HCT116 (cell line): ENCODE measurements at regions of chr6 and their contacts with region 1.

Region 1: GRCh38 chr6:157323255-157323965 is at the start of gene TMEM242:
- DNase-seq: peak; percentile 92
- ATAC-seq: peak; percentile 92
- H3K4me3 ChIP-seq: peak within 1 kb of the TSS; percentile 72 to 94
- H3K27ac ChIP-seq: peak within 1 kb of the TSS; percentile 52
- H3K4me1 ChIP-seq: peaks cover 3 to 11% of the 10 kb centered on the region in 2 experiments; a peak in 3 of 4 replicates
- H3K27me3 ChIP-seq: peaks cover 10% of the 10 kb centered on the region; the same call in 1 of the 2 replicates
- CTCF ChIP-seq: no peak
- POLR2A ChIP-seq: peak; percentile 90
- RAD21 ChIP-seq: peak; percentile 28; the same call in 1 of the 2 replicates
- total RNA-seq, gene TMEM242: 11.6 TPM

Region 2: DNA sequence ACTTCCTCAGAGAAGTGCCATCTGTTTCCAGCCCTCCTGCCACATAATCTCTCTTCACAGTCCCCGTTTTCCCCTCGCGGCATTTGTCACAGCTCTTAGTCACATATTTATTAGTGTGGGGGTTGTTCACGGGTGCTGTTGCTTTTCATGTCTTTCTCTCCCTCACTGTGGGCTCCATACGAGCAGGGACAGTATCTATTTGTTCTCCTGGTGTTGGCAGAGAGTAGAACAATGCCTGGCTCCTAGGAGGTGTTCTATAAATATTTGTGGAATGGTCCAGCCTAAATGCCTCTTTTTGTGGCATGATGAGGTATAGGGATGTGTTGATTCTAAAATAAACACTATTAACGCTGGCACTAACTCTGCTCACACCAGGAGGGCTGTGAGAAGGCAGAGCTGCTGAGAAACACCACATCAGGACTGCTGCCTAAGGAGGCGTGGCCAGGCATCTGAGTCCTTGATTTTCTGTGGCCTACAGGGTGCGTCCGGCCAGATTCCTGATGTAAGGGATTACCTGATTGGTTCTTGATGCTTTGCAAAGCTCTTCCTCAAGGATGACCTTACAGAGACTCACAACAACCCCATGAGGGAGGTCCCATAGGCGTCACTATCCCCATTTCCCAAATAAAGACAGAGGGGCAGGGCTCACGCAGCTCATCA is 766.0 kb before region 1 on chr6:
- CTCF ChIA-PET with region 1: no interaction called
- POLR2A ChIA-PET with region 1: no interaction called
- RAD21 ChIA-PET with region 1: no interaction called
- intact Hi-C with region 1: no loop called
- DNase-seq: no peak
- ATAC-seq: peak; percentile 58
- H3K4me3 ChIP-seq: no peak overlapping the region
- H3K27ac ChIP-seq: no peak overlapping the region
- H3K4me1 ChIP-seq: no peaks in the 10 kb centered on the region
- H3K27me3 ChIP-seq: peaks cover 2% of the 10 kb centered on the region; the same call in 1 of the 2 replicates
- CTCF ChIP-seq: no peak
- POLR2A ChIP-seq: no peak
- RAD21 ChIP-seq: no peak

Region 3: GRCh38 chr6:156890627-156891314 is 432.6 kb before region 1 on chr6:
- CTCF ChIA-PET with region 1: no interaction called
- POLR2A ChIA-PET with region 1: no interaction called
- RAD21 ChIA-PET with region 1: no interaction called
- intact Hi-C with region 1: no loop called
- DNase-seq: no peak
- ATAC-seq: no peak
- H3K4me3 ChIP-seq: no peak overlapping the region
- H3K27ac ChIP-seq: no peak overlapping the region
- H3K4me1 ChIP-seq: no peaks in the 10 kb centered on the region
- H3K27me3 ChIP-seq: no peaks in the 10 kb centered on the region
- CTCF ChIP-seq: no peak
- POLR2A ChIP-seq: no peak
- RAD21 ChIP-seq: no peak

Region 4: GRCh38 chr6:157335829-157336228 is 12.4 kb after region 1 on chr6:
- CTCF ChIA-PET with region 1: interaction called, 11 read pairs
- POLR2A ChIA-PET with region 1: interaction called, 3 read pairs
- RAD21 ChIA-PET with region 1: no interaction called
- intact Hi-C with region 1: no loop called
- DNase-seq: no peak
- ATAC-seq: peak; percentile 32
- H3K4me3 ChIP-seq: no peak overlapping the region
- H3K27ac ChIP-seq: no peak overlapping the region
- H3K4me1 ChIP-seq: 0 out of 4 replicates have a peak, but pooled peaks cover 0 to 5% of the 10 kb centered on the region in 2 experiments
- H3K27me3 ChIP-seq: no peaks in the 10 kb centered on the region
- CTCF ChIP-seq: no peak
- POLR2A ChIP-seq: no peak
- RAD21 ChIP-seq: no peak

Region 5: GRCh38 chr6:157514659-157515496 is 191.5 kb after region 1 on chr6:
- CTCF ChIA-PET with region 1: no interaction called
- POLR2A ChIA-PET with region 1: no interaction called
- RAD21 ChIA-PET with region 1: no interaction called
- intact Hi-C with region 1: no loop called
- DNase-seq: no peak
- ATAC-seq: peak; percentile 57
- H3K4me3 ChIP-seq: no peak overlapping the region
- H3K27ac ChIP-seq: no peak overlapping the region
- H3K4me1 ChIP-seq: peaks cover 15 to 45% of the 10 kb centered on the region in 2 experiments
- H3K27me3 ChIP-seq: no peaks in the 10 kb centered on the region
- CTCF ChIP-seq: no peak
- POLR2A ChIP-seq: no peak
- RAD21 ChIP-seq: no peak

Region 6: DNA sequence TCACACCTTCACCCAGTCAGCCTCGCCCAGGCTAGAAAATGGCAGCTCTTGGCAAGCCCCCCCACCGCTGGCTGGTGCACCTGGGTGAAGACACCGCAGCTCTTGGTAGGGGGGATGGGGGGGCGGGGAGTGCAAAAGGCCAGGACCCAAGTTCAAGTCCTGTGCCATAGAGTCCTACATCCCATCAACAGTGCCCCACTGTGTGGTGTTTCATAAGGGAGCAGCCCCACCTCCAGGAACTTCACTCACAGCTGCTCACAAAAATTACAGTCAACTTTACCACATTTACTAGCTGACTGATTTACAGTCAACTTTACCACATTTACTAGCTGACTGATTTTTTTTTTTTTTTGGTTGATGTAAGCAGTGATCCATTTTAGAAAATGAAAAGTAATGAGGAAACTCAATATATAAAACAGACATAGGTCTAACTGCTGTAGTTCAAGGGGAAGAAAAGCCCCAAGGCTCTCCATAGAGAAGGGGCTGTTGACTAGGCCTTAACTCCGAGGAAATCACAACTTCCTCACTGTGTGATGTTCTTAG is 290.7 kb after region 1 on chr6:
- CTCF ChIA-PET with region 1: no interaction called
- POLR2A ChIA-PET with region 1: interaction called, 5 read pairs
- RAD21 ChIA-PET with region 1: interaction called in 1 of 2 experiments, 3 read pairs
- intact Hi-C with region 1: loop called (anchors 5 kb)
- DNase-seq: no peak
- ATAC-seq: no peak
- H3K4me3 ChIP-seq: no peak overlapping the region
- H3K27ac ChIP-seq: peak overlapping the region; percentile 57
- H3K4me1 ChIP-seq: peaks cover 18 to 29% of the 10 kb centered on the region in 2 experiments
- H3K27me3 ChIP-seq: no peaks in the 10 kb centered on the region
- CTCF ChIP-seq: 0 out of 6 replicates have a peak, but pooled peaks of 1 of the 3 experiments have one; percentile 13
- POLR2A ChIP-seq: no peak
- RAD21 ChIP-seq: peak; percentile 43; the same call in 1 of the 2 replicates

Region 7: DNA sequence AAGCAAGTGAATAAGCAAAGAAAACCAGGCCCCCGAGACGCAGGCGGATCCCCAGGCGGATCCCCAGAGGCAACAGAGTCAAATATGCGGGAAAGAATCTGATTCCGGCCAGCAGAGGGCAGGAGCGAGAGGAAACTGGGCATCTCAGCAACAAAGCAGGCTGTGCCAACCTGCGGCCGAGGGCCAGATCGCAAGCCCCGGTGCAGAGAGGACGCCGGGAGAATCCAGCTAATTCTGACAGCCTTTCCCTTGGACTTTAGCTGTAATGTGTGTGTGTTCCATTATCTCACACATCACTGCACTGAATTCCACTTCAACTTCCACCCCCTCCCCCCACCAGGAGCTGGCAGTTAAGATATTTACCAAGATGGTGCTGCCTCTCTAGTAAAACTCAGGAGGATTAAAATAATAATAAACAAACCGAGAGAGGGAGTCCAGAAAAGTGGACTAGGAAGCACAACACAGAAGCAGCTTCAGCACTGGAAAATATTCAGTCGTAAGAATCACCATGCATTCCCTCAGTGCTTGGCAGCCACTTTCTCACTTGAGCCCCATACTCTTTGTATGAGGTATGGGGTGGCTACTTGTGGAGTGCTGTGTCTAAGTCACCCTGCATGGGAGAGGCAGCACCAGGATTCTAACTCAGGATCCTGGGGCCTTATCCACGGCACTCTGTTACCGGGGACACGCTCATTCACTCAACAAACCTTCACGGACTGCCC is 433.5 kb after region 1 on chr6:
- CTCF ChIA-PET with region 1: no interaction called
- POLR2A ChIA-PET with region 1: no interaction called
- RAD21 ChIA-PET with region 1: no interaction called
- intact Hi-C with region 1: loop called (anchors 2 kb)
- DNase-seq: peak; percentile 71
- ATAC-seq: peak; percentile 89
- H3K4me3 ChIP-seq: peak overlapping the region in 1 of 2 experiments; percentile 18; a peak in 1 of 4 replicates
- H3K27ac ChIP-seq: no peak overlapping the region
- H3K4me1 ChIP-seq: peaks cover 17 to 49% of the 10 kb centered on the region in 2 experiments
- H3K27me3 ChIP-seq: no peaks in the 10 kb centered on the region
- CTCF ChIP-seq: peak in 2 of 3 experiments; percentile 79 to 88; a peak in 4 of 6 replicates
- POLR2A ChIP-seq: no peak
- RAD21 ChIP-seq: no peak